Caco-2 (cell line): ENCODE measurements at regions of chr7 and their contacts with region 1.

Region 1: GRCh38 chr7:99997545-99998137 is 17.8 kb upstream of the ZKSCAN1 start:
- DNase-seq: peak; percentile 77 to 82
- H3K4me3 ChIP-seq: peak overlapping the region; percentile 38
- H3K4me3 Mint-ChIP-seq: peak overlapping the region; percentile 76
- H3K27ac Mint-ChIP-seq: peak overlapping the region; percentile 89
- H3K4me1 ChIP-seq: peaks cover 13% of the 10 kb centered on the region; the same call in 1 of the 2 replicates
- H3K4me1 Mint-ChIP-seq: peaks cover 7% of the 10 kb centered on the region
- H3K27me3 ChIP-seq: no peaks in the 10 kb centered on the region
- H3K27me3 Mint-ChIP-seq: no peaks in the 10 kb centered on the region
- CTCF ChIP-seq: peak; percentile 33 to 37

Region 2: GRCh38 chr7:100015232-100016209 is 17.9 kb after region 1 on chr7 and contains the start of gene ZKSCAN1:
- CTCF ChIA-PET with region 1: interaction called, 4 read pairs
- POLR2A ChIA-PET with region 1: interaction called, 11 read pairs
- intact Hi-C with region 1: loop called (anchors 1 kb)
- DNase-seq: peak; percentile 86 to 90
- H3K4me3 ChIP-seq: peak within 1 kb of the TSS; percentile 82
- H3K4me3 Mint-ChIP-seq: peak within 1 kb of the TSS; percentile 91
- H3K27ac Mint-ChIP-seq: peak within 1 kb of the TSS; percentile 90
- H3K4me1 ChIP-seq: peaks cover 18% of the 10 kb centered on the region
- H3K4me1 Mint-ChIP-seq: peaks cover 14% of the 10 kb centered on the region
- H3K27me3 ChIP-seq: no peaks in the 10 kb centered on the region
- H3K27me3 Mint-ChIP-seq: no peaks in the 10 kb centered on the region
- CTCF ChIP-seq: no peak
- total RNA-seq, gene ZKSCAN1: 44.8 and 47.5 TPM in 2 replicates

Region 3: DNA sequence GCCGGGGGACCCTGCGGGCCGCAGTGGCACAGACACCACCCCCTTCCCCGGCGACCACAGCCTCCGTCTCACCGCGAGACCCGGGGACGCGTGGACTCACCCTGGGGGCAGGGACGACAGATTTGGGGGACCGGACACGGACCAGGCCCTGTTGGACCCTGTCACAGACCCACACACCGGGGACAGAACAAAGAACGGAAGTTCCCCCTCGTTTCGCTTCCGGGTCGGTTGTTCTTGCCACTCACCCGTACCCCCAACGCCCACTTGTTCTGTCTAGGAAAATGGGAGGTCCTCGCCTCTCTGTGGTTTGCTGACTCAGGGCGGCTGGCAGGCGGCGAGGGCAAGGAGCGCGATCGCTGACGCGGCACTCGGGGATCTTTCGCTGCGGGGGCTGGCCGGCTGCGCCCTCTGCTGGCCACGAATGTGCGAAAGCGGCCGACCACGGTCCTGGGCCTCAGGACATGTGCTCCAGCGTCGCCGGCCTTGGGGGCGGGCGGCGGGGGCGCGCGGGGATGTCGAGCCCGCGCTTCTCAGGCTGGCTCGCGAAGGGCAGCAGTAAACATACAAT is 84.0 kb after region 1 on chr7 and contains the start of gene ZNF3:
- CTCF ChIA-PET with region 1: interaction called, 3 read pairs
- POLR2A ChIA-PET with region 1: no interaction called
- intact Hi-C with region 1: loop called (anchors 1 kb)
- DNase-seq: peak; percentile 99
- H3K4me3 ChIP-seq: peak within 1 kb of the TSS; percentile 74
- H3K4me3 Mint-ChIP-seq: peak within 1 kb of the TSS; percentile 83
- H3K27ac Mint-ChIP-seq: peak within 1 kb of the TSS; percentile 46
- H3K4me1 ChIP-seq: peaks cover 24% of the 10 kb centered on the region
- H3K4me1 Mint-ChIP-seq: peaks cover 14% of the 10 kb centered on the region
- H3K27me3 ChIP-seq: no peaks in the 10 kb centered on the region
- H3K27me3 Mint-ChIP-seq: no peaks in the 10 kb centered on the region
- CTCF ChIP-seq: peak; percentile 89 to 91
- total RNA-seq, gene ZNF3: 37.8 and 41.1 TPM in 2 replicates

Region 4: DNA sequence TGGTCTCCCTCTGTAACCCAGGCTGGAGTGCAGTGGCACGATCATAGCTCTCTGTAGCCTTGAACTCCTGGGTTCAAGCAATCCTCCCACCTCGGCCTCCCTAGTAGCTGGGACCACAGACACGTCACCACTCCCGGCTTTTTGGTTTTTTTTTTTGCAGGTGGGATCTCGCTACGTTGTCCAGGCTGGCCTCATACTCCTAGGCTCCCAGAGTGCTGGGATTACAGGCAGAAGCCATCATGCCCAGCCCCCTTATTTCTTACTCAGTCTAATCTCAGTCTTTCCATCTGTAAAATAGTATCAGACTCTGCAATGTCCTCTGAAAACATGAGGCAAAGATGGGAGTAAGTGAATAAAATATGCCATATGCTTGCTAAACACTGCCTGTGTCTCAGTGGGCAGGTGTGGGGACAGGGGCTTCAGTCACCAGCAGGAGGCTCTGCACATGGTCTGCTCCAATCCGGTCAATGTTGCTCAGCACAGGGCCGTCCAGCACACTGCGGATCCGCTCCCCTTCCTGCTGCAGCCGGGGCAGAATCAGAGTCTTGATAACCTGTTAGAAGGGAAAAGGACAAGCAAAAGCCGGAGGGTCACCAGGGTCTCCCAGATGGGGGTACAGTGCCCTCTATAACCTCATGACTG is 112.0 kb after region 1 on chr7:
- CTCF ChIA-PET with region 1: no interaction called
- POLR2A ChIA-PET with region 1: no interaction called
- intact Hi-C with region 1: no loop called
- DNase-seq: peak in 1 of 2 experiments; percentile 34
- H3K4me3 ChIP-seq: no peak overlapping the region
- H3K4me3 Mint-ChIP-seq: no peak overlapping the region
- H3K27ac Mint-ChIP-seq: no peak overlapping the region
- H3K4me1 ChIP-seq: no peaks in the 10 kb centered on the region
- H3K4me1 Mint-ChIP-seq: no peaks in the 10 kb centered on the region
- H3K27me3 ChIP-seq: no peaks in the 10 kb centered on the region
- H3K27me3 Mint-ChIP-seq: no peaks in the 10 kb centered on the region
- CTCF ChIP-seq: peak in 1 of 2 experiments; percentile 45

Region 5: GRCh38 chr7:100429637-100430492 is 432.2 kb after region 1 on chr7 and contains the start of gene MEPCE:
- CTCF ChIA-PET with region 1: no interaction called
- POLR2A ChIA-PET with region 1: no interaction called
- intact Hi-C with region 1: no loop called
- DNase-seq: peak; percentile 97 to 98
- H3K4me3 ChIP-seq: peak within 1 kb of the TSS; percentile 88
- H3K4me3 Mint-ChIP-seq: peak within 1 kb of the TSS; percentile 89
- H3K27ac Mint-ChIP-seq: peak within 1 kb of the TSS; percentile 99
- H3K4me1 ChIP-seq: 0 out of 2 replicates have a peak, but pooled peaks cover 10% of the 10 kb centered on the region
- H3K4me1 Mint-ChIP-seq: peaks cover 18% of the 10 kb centered on the region
- H3K27me3 ChIP-seq: no peaks in the 10 kb centered on the region
- H3K27me3 Mint-ChIP-seq: peaks cover 4% of the 10 kb centered on the region
- CTCF ChIP-seq: no peak
- total RNA-seq, gene MEPCE: 41.0 and 43.3 TPM in 2 replicates